ENCODE measurements at regions of chr6 and their contacts with region 1.

Region 1: DNA sequence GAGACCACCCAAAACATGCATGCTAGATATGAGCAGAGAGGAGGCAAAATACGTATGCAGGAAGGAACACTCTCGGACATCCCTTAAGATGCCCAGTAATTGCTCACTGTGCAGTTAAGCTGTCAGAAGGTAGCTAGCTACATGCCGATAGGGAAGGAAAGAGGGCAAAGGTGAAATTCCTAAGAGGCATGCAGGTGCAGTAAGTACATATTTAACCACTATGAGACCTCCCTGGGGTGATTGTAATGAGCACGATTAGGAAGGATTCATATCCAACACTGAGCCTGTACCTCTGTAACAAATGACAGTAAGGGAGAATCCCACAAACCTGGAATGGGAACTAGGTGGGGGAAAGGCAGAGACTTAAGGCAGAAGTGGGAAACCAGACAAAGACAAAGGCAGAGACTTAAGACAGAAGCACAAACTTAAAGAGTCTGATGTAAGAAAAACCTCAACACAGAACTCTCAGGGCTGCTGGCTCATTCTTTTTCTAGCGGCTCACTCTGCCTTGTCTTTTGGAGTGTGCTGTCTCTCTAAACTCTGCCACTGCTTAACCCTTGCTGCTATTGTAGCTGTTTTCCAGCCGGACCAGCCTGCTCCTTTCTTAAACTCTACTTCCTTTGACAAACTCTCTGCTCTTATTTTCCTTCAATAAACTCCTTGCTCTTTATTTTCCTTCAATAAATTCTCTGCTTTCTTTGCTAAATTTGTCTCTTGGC is 148.1 kb downstream of the UBE3D start:
- DNase-seq: peak; percentile 57 to 66
- H3K4me3 ChIP-seq: no peak overlapping the region
- H3K4me3 Mint-ChIP-seq: peak overlapping the region; percentile 59
- H3K27ac Mint-ChIP-seq: peak overlapping the region; percentile 79
- H3K4me1 ChIP-seq: peaks cover 18% of the 10 kb centered on the region
- H3K4me1 Mint-ChIP-seq: peaks cover 27% of the 10 kb centered on the region
- H3K27me3 ChIP-seq: no peaks in the 10 kb centered on the region
- H3K27me3 Mint-ChIP-seq: no peaks in the 10 kb centered on the region
- CTCF ChIP-seq: no peak

Region 2: GRCh38 chr6:82963191-82963926 is 45.9 kb after region 1 on chr6:
- CTCF ChIA-PET with region 1: no interaction called
- POLR2A ChIA-PET with region 1: no interaction called
- intact Hi-C with region 1: loop called (anchors 5 kb)
- DNase-seq: no peak
- H3K4me3 ChIP-seq: no peak overlapping the region
- H3K4me3 Mint-ChIP-seq: no peak overlapping the region
- H3K27ac Mint-ChIP-seq: no peak overlapping the region
- H3K4me1 ChIP-seq: no peaks in the 10 kb centered on the region
- H3K4me1 Mint-ChIP-seq: no peaks in the 10 kb centered on the region
- H3K27me3 ChIP-seq: no peaks in the 10 kb centered on the region
- H3K27me3 Mint-ChIP-seq: no peaks in the 10 kb centered on the region
- CTCF ChIP-seq: no peak